Calu3 (cell line): ENCODE measurements at regions of chr19 and their contacts with region 1.

Region 1: GRCh38 chr19:39671738-39672363 is 16.1 kb downstream of the LGALS16 start:
- DNase-seq: peak; percentile 71
- H3K4me3 Mint-ChIP-seq: no peak overlapping the region
- H3K27ac Mint-ChIP-seq: no peak overlapping the region
- H3K4me1 Mint-ChIP-seq: peaks cover 8% of the 10 kb centered on the region
- H3K27me3 Mint-ChIP-seq: peaks cover 53% of the 10 kb centered on the region
- CTCF ChIP-seq: peak; percentile 62

Region 2: GRCh38 chr19:39445265-39446111 is 226.4 kb before region 1 on chr19 and contains the start of gene SUPT5H:
- CTCF ChIA-PET with region 1: no interaction called
- intact Hi-C with region 1: loop called (anchors 10 kb)
- DNase-seq: peak; percentile 98
- H3K4me3 Mint-ChIP-seq: peak within 1 kb of the TSS; percentile 96
- H3K27ac Mint-ChIP-seq: peak within 1 kb of the TSS; percentile 99
- H3K4me1 Mint-ChIP-seq: peaks cover 16% of the 10 kb centered on the region
- H3K27me3 Mint-ChIP-seq: no peaks in the 10 kb centered on the region
- CTCF ChIP-seq: no peak
- total RNA-seq, gene SUPT5H: 158 and 189 TPM in 2 replicates

Region 3: GRCh38 chr19:39546599-39546998 is 125.3 kb before region 1 on chr19:
- CTCF ChIA-PET with region 1: interaction called, 24 read pairs
- intact Hi-C with region 1: loop called (anchors 1 kb)
- DNase-seq: no peak
- H3K4me3 Mint-ChIP-seq: no peak overlapping the region
- H3K27ac Mint-ChIP-seq: no peak overlapping the region
- H3K4me1 Mint-ChIP-seq: peaks cover 8% of the 10 kb centered on the region
- H3K27me3 Mint-ChIP-seq: peaks cover 61% of the 10 kb centered on the region
- CTCF ChIP-seq: no peak